WTC11 (cell line): ENCODE measurements at regions of chr9 and their contacts with region 1.

Region 1: DNA sequence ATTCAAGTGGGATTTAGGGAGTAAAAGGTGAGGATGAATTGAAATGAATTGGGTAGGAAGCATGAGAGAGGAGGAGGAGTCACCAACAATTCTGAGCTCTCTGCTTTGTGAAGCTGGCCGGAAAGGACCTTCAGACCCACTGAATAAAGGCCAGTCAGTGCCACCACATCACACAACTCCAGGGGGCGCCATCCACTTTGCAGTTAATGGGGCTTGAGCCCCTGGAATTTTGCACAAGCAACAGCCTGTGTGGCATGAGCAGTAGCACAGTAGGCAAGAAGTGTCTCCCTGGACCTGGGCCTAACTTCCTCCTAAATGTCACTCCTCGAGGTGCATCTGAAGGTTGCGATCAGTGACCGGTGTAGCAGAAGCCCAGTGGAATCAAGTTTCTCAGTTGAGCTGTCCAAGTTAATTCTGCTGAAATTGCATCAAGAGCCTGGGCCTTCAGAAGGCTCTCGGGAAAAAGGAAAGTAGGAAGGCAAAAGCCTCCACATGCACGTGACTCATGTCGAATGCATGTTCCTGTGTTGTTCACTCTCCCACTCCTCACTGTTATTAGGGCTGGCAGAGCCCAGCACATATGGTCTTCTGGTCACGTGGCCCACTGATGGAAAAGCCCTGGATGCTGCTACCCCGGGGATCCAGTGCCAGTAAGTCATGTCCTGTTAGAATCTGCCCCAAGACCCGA is 27.8 kb upstream of the GLIS3 start:
- DNase-seq: peak; percentile 52
- ATAC-seq: peak; percentile 72
- H3K4me3 Mint-ChIP-seq: no peak overlapping the region
- H3K27ac Mint-ChIP-seq: no peak overlapping the region
- H3K4me1 Mint-ChIP-seq: no peaks in the 10 kb centered on the region
- H3K27me3 Mint-ChIP-seq: no peaks in the 10 kb centered on the region; the same call in 1 of the 2 replicates
- CTCF ChIP-seq: 0 out of 2 replicates have a peak, but pooled peaks have one; percentile 38

Region 2: GRCh38 chr9:4020038-4020754 is 307.5 kb before region 1 on chr9:
- CTCF ChIA-PET with region 1: no interaction called
- POLR2A ChIA-PET with region 1: no interaction called
- DNase-seq: no peak
- ATAC-seq: no peak
- H3K4me3 Mint-ChIP-seq: no peak overlapping the region
- H3K27ac Mint-ChIP-seq: no peak overlapping the region
- H3K4me1 Mint-ChIP-seq: peaks cover 5% of the 10 kb centered on the region
- H3K27me3 Mint-ChIP-seq: no peaks in the 10 kb centered on the region
- CTCF ChIP-seq: no peak

Region 3: GRCh38 chr9:4297151-4297785 is 30.4 kb before region 1 on chr9:
- CTCF ChIA-PET with region 1: interaction called, 10 read pairs
- POLR2A ChIA-PET with region 1: no interaction called
- DNase-seq: peak; percentile 67
- ATAC-seq: peak; percentile 52
- H3K4me3 Mint-ChIP-seq: peak overlapping the region; percentile 95
- H3K27ac Mint-ChIP-seq: peak overlapping the region; percentile 28; the same call in 1 of the 2 replicates
- H3K4me1 Mint-ChIP-seq: peaks cover 19% of the 10 kb centered on the region
- H3K27me3 Mint-ChIP-seq: peaks cover 69% of the 10 kb centered on the region
- CTCF ChIP-seq: no peak

Region 4: DNA sequence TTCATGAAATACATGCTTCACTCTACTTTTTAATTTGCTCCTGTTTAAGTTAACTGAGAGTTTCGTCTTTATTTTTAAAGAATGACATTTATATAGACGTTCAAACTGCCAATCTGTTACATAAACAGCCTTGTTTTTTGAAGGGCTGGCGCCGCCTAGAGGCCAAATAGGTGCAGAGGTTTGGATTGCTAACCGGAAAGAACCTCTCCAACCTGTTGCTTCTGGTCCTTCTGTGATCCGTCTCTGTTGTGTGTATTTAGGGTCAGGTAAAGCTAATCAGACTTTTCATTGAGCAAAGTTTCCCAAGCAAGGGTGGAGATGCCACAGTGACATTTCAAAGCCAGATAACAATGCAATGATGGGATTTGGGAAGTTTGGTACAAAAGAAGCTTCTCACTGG is 11.7 kb after region 1 on chr9:
- CTCF ChIA-PET with region 1: interaction called, 17 read pairs
- POLR2A ChIA-PET with region 1: no interaction called
- DNase-seq: peak; percentile 80
- ATAC-seq: peak; percentile 73
- H3K4me3 Mint-ChIP-seq: no peak overlapping the region
- H3K27ac Mint-ChIP-seq: peak overlapping the region; percentile 54
- H3K4me1 Mint-ChIP-seq: peaks cover 3% of the 10 kb centered on the region
- H3K27me3 Mint-ChIP-seq: no peaks in the 10 kb centered on the region; the same call in 1 of the 2 replicates
- CTCF ChIP-seq: peak; percentile 83